AG04449 (cell line): ENCODE measurements at regions of chr22 and their contacts with region 1.

Region 1: DNA sequence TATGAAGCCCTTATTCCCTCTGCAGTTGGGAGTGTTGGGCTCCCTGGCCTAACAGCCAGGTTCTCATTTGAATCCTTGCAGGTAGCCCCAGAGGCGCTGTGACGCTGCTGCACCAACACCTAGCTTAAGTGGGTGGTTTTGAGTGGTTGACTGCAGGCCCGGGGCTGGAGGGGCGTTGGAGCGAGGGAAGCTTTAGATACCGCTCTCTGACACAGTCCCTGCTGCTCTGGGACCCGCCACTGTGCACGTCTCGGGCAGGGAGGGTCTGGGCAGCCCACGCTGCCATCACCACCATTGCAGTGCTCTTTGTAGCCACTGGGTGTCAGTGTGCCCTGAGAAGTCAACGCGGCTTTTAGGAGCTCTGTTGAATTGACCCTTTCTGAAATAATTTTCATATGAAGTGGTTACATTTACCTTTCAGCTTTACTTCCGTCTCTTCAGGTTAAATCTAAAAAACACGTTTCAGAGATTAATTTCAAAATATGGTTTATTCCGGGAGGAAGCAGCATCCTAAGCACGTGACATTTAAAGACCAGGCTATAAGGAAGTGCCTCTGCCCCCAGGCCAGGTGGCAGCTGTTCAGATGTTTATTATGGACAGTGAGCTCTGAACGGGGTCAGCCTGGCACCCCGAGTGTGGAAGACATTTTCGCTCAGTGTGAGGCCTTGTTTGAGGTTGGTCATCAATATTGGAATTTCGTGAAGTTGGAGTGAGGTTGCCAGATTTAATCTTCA is 30.9 kb upstream of the PARVB start:
- DNase-seq: no peak
- H3K4me3 ChIP-seq: no peak overlapping the region
- CTCF ChIP-seq: peak; percentile 93

Region 2: GRCh38 chr22:43897751-43898261 is 95.4 kb before region 1 on chr22:
- CTCF ChIA-PET with region 1: no interaction called
- POLR2A ChIA-PET with region 1: no interaction called
- DNase-seq: no peak
- H3K4me3 ChIP-seq: no peak overlapping the region
- CTCF ChIP-seq: no peak

Region 3: DNA sequence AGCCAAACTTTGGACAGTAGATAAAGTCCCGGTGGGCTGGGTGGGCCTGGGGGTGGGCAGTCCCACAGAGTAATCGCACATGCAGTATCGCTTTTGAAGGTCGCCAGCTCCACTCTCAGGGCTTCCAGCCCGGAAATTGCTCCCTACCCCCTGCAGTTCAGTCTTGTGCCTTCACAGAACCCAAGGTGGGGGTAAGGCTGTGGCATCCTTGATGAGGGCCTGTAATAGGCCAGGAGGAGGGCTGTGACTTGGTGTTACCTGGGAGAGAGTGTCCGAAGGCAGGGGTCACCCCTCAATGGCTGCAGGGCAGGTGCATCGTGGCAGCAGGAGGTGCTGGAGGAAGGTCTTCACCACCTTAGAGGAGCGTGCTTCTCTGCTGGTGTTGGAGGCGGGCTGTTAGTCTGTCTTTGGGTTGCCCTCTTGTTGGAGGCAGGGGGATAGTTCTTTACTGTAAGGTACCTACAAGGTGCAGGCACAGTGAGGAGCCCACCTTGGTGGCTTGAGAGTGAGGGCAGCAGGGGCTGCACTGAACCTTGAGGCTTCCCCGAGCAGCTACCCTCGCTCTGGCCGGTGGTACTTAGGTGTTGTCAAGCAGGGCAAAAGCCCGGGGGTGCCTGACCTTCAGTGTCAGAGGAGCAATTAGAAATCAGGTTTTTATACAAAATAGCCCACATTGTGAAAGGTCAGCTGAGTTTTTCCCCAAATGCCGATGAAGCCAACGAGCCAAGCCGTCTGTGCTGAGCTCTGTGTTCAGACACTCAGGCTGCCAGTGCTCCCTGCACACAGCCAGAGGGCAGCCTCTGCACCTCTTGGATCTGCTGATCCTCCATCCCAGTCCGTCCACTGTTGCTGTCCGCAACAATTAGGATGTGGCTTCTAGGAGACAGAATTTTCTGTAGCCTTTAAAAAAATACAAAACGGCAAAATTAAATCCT is 16.1 kb before region 1 on chr22:
- CTCF ChIA-PET with region 1: interaction called, 53 read pairs
- POLR2A ChIA-PET with region 1: no interaction called
- DNase-seq: no peak
- H3K4me3 ChIP-seq: no peak overlapping the region
- CTCF ChIP-seq: no peak

Region 4: GRCh38 chr22:44020981-44021380 is 27.8 kb after region 1 on chr22:
- CTCF ChIA-PET with region 1: interaction called, 19 read pairs
- POLR2A ChIA-PET with region 1: no interaction called
- DNase-seq: no peak
- H3K4me3 ChIP-seq: no peak overlapping the region
- CTCF ChIP-seq: no peak

Region 5: GRCh38 chr22:44080936-44081861 is 88.0 kb after region 1 on chr22:
- CTCF ChIA-PET with region 1: interaction called, 226 read pairs
- POLR2A ChIA-PET with region 1: no interaction called
- DNase-seq: peak; percentile 19
- H3K4me3 ChIP-seq: no peak overlapping the region
- CTCF ChIP-seq: peak; percentile 89

Region 6: GRCh38 chr22:44567846-44568493 is 574.8 kb after region 1 on chr22:
- CTCF ChIA-PET with region 1: interaction called, 25 read pairs
- POLR2A ChIA-PET with region 1: no interaction called
- DNase-seq: no peak
- H3K4me3 ChIP-seq: no peak overlapping the region
- CTCF ChIP-seq: peak; percentile 70

Region 7: DNA sequence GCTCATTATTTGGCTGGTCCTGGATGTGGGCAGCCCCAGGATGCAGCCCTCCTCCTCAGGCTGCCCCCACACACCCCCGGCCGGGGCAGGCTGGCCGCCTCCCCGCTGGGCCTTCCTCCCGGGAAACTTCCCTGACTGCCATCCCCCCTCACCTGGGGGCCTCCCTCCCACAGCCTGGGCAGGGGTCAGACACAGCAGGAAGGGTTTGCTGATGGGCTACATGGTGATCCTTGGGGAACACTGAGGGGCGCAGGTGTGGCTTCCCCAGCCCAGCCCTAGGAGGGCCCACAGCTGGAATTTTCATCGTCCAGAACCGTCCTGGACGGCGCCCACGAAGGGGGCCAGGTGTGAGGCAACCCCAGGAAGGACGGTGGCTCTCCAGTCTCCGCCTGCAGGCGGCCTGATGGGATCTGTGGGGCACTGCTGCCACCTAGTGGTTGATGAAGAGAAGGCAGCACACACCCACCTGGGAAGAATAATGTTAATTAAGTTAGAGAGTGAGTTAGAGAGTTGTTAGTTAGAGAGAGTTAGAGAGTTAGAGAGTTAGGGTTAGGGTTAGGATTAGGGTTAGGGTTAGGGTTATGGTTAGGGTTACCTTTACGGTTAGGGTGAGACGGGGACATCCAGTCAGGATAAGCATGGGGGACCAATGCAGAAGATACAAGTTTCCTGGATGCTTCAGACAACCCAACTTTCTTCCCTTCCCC is 632.9 kb after region 1 on chr22:
- CTCF ChIA-PET with region 1: interaction called, 319 read pairs
- POLR2A ChIA-PET with region 1: no interaction called
- DNase-seq: no peak
- H3K4me3 ChIP-seq: no peak overlapping the region
- CTCF ChIP-seq: peak; percentile 89